ENCODE measurements at regions of chr2 and their contacts with region 1.

Region 1: DNA sequence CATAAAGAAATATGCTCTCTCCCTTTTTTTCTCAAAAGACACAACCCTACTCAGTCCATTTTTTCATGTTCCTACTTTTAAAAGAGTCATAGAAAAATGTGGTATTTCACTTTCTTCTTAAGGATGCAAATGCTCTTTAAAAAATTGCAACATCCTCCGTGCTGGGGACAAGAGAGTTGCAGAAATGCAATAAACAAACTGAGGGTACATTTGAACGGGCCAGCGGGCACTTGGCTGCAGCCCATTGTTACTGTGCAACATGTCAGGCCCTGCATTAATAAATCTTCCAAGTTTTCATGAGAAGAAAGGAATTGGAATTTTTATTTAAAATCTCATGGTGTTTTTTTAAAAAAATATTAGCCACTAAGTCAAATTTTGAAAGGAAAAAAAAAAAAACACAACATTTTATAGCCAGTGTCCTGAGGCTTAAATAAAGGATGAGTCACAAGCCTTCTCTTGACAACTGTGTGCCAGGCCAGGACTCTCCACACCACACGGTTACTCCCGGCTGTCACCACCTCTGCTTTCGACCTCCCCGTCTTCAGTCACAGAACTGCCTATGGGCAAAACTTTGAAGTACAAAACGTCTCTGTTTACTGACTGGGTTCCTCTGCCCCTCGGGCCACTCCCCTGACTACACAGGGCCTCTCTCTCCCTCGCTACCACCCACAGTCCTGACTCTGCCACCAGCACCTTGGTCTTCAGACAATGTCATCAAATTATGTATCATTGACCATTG is 57.5 kb upstream of the MFF start:
- DNase-seq: peak in 1 of 2 donors; percentile 5
- ATAC-seq: peak in 6 of 8 donors; percentile 46 to 94 (median 71)
- H3K4me3 ChIP-seq: no peak overlapping the region
- H3K27ac ChIP-seq: no peak overlapping the region
- H3K4me1 ChIP-seq: peaks cover 0 to 3% (median 0%) of the 10 kb centered on the region in 9 donors
- H3K27me3 ChIP-seq: no peaks in the 10 kb centered on the region
- CTCF ChIP-seq: no peak

Region 2: GRCh38 chr2:227038550-227039189 is 228.9 kb before region 1 on chr2:
- intact Hi-C with region 1: loop called in 1 of 10 experiments (anchors 5 kb)
- DNase-seq: no peak
- ATAC-seq: no peak
- H3K4me3 ChIP-seq: no peak overlapping the region
- H3K27ac ChIP-seq: no peak overlapping the region
- H3K4me1 ChIP-seq: peaks cover 0 to 7% (median 0%) of the 10 kb centered on the region in 9 donors
- H3K27me3 ChIP-seq: no peaks in the 10 kb centered on the region
- CTCF ChIP-seq: no peak

Region 3: GRCh38 chr2:227132986-227133385 is 134.6 kb before region 1 on chr2:
- intact Hi-C with region 1: no loop called
- DNase-seq: peak in 1 of 2 donors; percentile 22
- ATAC-seq: peak in 1 of 8 donors; percentile 70
- H3K4me3 ChIP-seq: no peak overlapping the region
- H3K27ac ChIP-seq: peak overlapping the region in 1 of 10 donors; percentile 21
- H3K4me1 ChIP-seq: peaks cover 0 to 13% (median 0%) of the 10 kb centered on the region in 9 donors
- H3K27me3 ChIP-seq: no peaks in the 10 kb centered on the region
- CTCF ChIP-seq: no peak

Region 4: DNA sequence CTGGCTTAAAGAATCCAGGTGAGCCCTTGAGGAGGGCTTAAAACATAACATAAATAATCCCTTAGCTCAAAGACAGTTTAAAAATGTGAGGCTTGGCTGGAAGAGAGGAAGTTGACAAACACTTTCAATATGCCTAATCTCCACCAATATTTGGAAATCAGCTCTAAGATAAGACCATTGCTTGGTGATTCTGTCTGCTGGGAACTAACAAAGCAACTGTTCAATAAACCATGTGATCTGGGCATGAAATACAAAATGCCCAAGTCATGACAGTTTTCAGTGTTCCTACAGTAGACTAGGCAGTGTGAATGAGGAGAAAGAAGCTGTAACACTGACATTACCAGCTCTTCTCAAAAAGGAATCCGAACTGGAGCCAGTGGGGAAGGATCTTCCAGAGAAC is 68.1 kb after region 1 on chr2:
- intact Hi-C with region 1: no loop called
- DNase-seq: no peak
- ATAC-seq: no peak
- H3K4me3 ChIP-seq: no peak overlapping the region
- H3K27ac ChIP-seq: no peak overlapping the region
- H3K4me1 ChIP-seq: peaks cover 0 to 8% (median 0%) of the 10 kb centered on the region in 9 donors
- H3K27me3 ChIP-seq: no peaks in the 10 kb centered on the region
- CTCF ChIP-seq: no peak

Measured in heart right ventricle (tissue), 16 donors.